CD8-positive, alpha-beta T cell (primary cell): ENCODE measurements at regions of chr18 and their contacts with region 1.

Region 1: DNA sequence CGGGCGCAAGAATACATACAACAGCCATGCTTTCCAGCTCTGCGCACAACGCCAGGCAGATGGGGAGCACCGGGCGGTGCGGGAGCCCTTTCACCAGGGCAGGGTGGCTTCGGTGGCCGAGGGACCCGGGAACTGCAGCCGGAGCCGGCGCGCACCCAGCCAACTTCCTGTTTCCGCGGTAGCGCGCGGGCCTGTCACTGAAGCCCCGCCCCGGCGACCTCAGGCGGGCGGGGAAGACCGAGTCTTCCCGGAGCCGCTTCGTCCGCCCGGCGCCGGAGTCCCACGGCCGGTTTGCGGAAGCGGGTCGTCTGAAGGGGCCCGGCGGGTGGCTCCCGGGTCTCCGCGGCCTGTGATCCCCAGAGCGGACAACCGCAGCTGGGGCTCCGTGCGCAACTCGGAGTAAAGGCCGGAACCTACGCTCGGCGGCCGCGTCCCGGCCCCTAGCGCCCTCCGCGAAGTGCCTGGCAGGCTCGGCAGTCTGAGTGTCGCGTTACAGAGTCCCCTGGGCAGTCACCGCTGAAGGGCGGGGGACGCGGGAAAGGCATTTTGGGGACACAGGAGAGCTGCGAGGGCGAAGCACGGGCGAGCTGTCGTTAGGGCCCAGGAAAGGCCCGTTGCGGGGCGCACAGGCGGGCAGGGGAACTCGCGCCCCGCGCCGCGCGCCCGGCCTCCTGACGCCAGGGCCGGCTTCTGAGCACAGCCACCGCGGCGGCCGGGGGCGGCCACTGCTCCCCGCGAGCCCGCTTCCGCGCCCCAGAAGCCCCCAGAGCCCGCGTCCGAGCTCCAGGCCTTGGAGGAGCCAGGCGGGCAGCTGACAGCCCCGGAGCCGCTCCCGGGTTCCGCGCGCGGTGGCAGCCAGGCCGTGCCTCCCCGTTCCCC is at the start of gene MPPE1:
- DNase-seq: peak; percentile 69 to 93 (median 84)
- ATAC-seq: peak; percentile 90
- H3K4me3 ChIP-seq: peak within 1 kb of the TSS; percentile 85 to 100
- H3K4me3 Mint-ChIP-seq: peak within 1 kb of the TSS; percentile 96
- H3K27ac ChIP-seq: peak within 1 kb of the TSS; percentile 92 to 95
- H3K27ac Mint-ChIP-seq: peak within 1 kb of the TSS; percentile 96
- H3K4me1 ChIP-seq: peaks cover 11% of the 10 kb centered on the region
- H3K4me1 Mint-ChIP-seq: peaks cover 36% of the 10 kb centered on the region
- H3K27me3 ChIP-seq: no peaks in the 10 kb centered on the region
- H3K27me3 Mint-ChIP-seq: no peaks in the 10 kb centered on the region
- CTCF ChIP-seq: no peak
- total RNA-seq, gene MPPE1: 44.0 to 55.1 TPM

Region 2: DNA sequence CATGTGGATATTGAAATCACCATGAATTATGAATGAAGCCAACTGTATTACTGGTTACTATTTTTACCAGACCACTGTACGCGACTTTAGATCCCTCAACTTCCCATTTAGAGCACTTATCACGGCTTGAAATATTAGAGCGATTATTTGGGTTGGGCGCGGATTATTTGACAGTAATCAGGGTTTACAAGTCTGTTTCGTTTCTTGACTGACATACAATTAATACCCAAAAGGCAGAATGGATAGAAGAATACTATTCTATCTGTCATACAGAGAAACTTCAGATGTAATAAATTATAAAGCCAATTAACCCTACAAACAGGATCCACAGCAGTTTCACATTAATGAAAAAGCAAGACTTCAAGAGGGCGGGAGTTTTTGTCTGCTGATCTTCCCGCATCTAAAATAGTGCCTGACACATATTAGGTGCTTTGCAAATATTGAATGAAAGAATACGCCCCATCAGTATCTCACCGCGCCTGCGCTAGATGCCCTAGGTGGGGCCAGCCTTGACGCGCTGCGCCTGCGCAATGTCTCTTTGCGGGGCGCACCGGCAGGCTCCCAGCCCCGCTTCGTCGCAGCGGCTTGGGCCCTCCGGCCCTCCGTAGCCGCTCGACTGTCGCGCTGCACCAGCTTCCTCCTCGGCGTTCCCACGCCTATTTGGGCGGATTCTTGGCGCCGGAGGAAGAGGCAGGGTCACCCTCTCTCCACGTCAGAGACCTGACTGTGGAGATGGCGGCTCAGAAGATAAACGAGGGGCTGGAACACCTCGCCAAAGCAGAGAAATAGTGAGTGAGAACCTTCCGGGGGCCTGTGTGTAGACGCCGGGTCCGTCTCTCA is 1382.8 kb before region 1 on chr18 and contains the start of gene NAPG:
- CTCF ChIA-PET with region 1: no interaction called
- POLR2A ChIA-PET with region 1: no interaction called
- intact Hi-C with region 1: loop called (anchors 2 kb)
- DNase-seq: peak; percentile 78 to 97 (median 88)
- ATAC-seq: peak; percentile 86
- H3K4me3 ChIP-seq: peak within 1 kb of the TSS; percentile 90 to 98
- H3K4me3 Mint-ChIP-seq: peak within 1 kb of the TSS; percentile 97
- H3K27ac ChIP-seq: peak within 1 kb of the TSS; percentile 75 to 87
- H3K27ac Mint-ChIP-seq: peak within 1 kb of the TSS; percentile 96
- H3K4me1 ChIP-seq: peaks cover 31% of the 10 kb centered on the region
- H3K4me1 Mint-ChIP-seq: peaks cover 50% of the 10 kb centered on the region
- H3K27me3 ChIP-seq: no peaks in the 10 kb centered on the region
- H3K27me3 Mint-ChIP-seq: no peaks in the 10 kb centered on the region
- CTCF ChIP-seq: no peak
- total RNA-seq, gene NAPG: 33.2 to 35.8 TPM

Region 3: GRCh38 chr18:11851146-11851805 is 57.1 kb before region 1 on chr18 and contains the start of gene CHMP1B:
- CTCF ChIA-PET with region 1: no interaction called
- POLR2A ChIA-PET with region 1: interaction called, 15 read pairs
- intact Hi-C with region 1: loop called (anchors 1 kb)
- DNase-seq: peak; percentile 93 to 99 (median 98)
- ATAC-seq: peak; percentile 83
- H3K4me3 ChIP-seq: peak within 1 kb of the TSS; percentile 94 to 99
- H3K4me3 Mint-ChIP-seq: peak within 1 kb of the TSS; percentile 100
- H3K27ac ChIP-seq: peak within 1 kb of the TSS; percentile 96 to 99
- H3K27ac Mint-ChIP-seq: peak within 1 kb of the TSS; percentile 100
- H3K4me1 ChIP-seq: peaks cover 25% of the 10 kb centered on the region
- H3K4me1 Mint-ChIP-seq: peaks cover 50% of the 10 kb centered on the region
- H3K27me3 ChIP-seq: no peaks in the 10 kb centered on the region
- H3K27me3 Mint-ChIP-seq: no peaks in the 10 kb centered on the region
- CTCF ChIP-seq: no peak
- total RNA-seq, gene CHMP1B: 71.2 to 74.2 TPM

Region 4: GRCh38 chr18:11980555-11981382 is 72.3 kb after region 1 on chr18:
- CTCF ChIA-PET with region 1: no interaction called
- POLR2A ChIA-PET with region 1: interaction called, 3 read pairs
- intact Hi-C with region 1: loop called (anchors 1 to 2 kb)
- DNase-seq: peak; percentile 88 to 97 (median 92)
- ATAC-seq: peak; percentile 90
- H3K4me3 ChIP-seq: peak overlapping the region; percentile 56 to 68
- H3K4me3 Mint-ChIP-seq: peak overlapping the region; percentile 85
- H3K27ac ChIP-seq: no peak overlapping the region
- H3K27ac Mint-ChIP-seq: peak overlapping the region; percentile 52
- H3K4me1 ChIP-seq: no peaks in the 10 kb centered on the region
- H3K4me1 Mint-ChIP-seq: peaks cover 11% of the 10 kb centered on the region
- H3K27me3 ChIP-seq: peaks cover 0 to 2% of the 10 kb centered on the region in 2 experiments
- H3K27me3 Mint-ChIP-seq: no peaks in the 10 kb centered on the region
- CTCF ChIP-seq: no peak

Region 5: GRCh38 chr18:12990967-12991838 is 1082.8 kb after region 1 on chr18 and contains the start of gene CEP192:
- CTCF ChIA-PET with region 1: no interaction called
- POLR2A ChIA-PET with region 1: no interaction called
- intact Hi-C with region 1: loop called in 1 of 2 experiments (anchors 10 kb)
- DNase-seq: peak; percentile 94 to 99 (median 97)
- ATAC-seq: peak; percentile 96
- H3K4me3 ChIP-seq: peak within 1 kb of the TSS; percentile 79 to 90
- H3K4me3 Mint-ChIP-seq: peak within 1 kb of the TSS; percentile 98
- H3K27ac ChIP-seq: peak within 1 kb of the TSS; percentile 57 to 75
- H3K27ac Mint-ChIP-seq: peak within 1 kb of the TSS; percentile 97
- H3K4me1 ChIP-seq: peaks cover 27% of the 10 kb centered on the region
- H3K4me1 Mint-ChIP-seq: peaks cover 17% of the 10 kb centered on the region
- H3K27me3 ChIP-seq: no peaks in the 10 kb centered on the region
- H3K27me3 Mint-ChIP-seq: no peaks in the 10 kb centered on the region
- CTCF ChIP-seq: no peak
- total RNA-seq, gene CEP192: 22.8 to 24.3 TPM